Posterior vena cava (tissue), 2 donors: ENCODE measurements at regions of chr7 and their contacts with region 1.

Region 1: DNA sequence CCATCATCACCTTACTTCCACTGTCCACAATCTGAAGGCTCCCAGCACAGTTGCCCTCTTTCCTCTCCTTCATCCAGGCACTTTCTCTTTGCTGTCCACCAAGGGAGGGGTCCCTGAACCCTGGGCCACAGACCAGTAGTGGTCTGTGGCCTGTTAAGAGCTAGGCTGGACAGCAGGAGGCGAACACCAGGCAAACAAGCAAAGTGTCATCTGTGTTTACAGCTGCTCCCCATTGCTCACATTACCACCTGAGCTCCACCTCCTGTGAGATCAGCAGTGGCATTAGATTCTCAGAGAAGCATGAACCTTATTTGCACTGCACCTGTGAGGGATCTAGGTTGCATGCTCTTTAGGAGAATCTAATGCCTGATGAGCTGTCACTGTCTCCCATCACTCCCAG is 27.7 kb downstream of the FZD1 start:
- DNase-seq: no peak

Region 2: DNA sequence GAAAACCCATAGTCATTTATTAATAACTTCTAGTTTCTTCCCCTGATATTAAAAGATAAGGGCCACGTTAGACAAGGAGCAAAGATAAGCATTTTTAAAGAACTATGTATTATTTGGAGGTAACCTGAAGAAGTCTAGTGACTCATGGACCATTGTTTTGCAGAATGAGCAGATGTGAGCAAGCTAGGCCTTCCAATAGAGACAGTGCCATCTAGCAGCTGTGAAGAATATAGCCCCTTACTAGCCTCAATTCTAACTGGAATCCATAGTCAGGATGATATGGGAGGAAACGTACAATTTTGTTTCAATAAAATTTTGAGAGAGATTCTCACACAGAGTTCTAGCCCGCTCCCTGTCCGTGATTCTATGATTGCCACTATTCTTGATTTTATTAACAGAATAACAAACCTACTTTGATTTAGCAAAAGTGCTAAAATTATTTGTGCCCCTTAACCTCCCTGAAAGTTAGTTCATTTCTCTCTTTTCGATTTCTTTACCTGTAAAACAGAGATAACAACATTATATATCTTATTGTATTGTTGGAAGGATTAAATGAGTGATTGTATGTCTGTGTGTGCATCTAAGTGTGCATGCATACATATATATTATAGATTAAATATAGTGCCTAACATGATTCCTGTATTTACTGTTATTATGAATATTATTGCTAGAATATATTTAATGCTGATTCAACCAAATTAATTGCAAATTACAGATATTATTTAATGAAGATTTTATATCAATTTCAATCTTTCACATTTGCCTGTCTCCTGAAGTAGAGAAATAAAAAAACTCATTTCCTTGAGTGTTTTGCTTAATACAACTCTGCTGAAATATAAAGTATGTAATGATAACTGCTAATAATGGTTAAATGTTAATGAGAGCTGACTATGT is 993.5 kb before region 1 on chr7:
- intact Hi-C with region 1: loop called in 1 of 2 experiments (anchors 5 kb)
- DNase-seq: no peak

Region 3: GRCh38 chr7:91201442-91202113 is 90.3 kb before region 1 on chr7:
- intact Hi-C with region 1: no loop called
- DNase-seq: no peak

Region 4: DNA sequence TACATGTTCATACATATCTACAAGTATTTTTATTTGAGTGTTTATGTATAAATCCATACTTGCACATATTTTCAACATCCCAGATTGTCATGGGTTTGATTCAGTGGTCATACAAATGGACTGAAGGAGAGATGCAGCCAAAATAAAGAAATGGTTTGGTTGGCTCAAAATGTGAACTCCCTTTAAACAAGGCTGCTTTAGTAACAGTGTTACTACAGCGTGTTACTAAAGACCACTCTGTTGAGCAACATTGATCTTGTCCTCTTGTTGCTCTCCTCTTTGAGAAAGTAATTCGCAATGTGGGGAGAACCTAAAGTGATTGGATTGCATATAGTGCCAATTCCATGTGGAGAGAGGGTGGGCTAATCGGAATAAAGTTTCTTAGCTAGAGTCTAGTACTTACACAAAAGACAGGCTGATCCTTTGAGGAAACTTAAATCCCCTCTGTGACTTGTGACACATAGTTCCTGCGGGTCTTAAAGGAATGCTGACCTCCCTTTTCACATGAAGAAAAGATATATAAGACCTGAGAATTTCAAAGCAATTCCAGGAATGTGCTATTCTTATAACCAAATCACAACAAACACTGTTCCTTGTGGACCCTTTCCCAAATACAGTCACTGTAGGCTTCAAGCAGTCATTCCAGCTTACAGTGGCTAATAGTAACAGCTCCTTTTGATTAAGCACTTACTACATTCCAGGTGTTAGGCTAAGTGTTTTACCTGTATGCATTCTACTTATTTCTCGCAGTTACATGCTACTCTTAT is 116.7 kb after region 1 on chr7:
- intact Hi-C with region 1: no loop called
- DNase-seq: no peak